Posterior cingulate gyrus (tissue), 11 donors: ENCODE measurements at regions of chr1 and their contacts with region 1.

Region 1: DNA sequence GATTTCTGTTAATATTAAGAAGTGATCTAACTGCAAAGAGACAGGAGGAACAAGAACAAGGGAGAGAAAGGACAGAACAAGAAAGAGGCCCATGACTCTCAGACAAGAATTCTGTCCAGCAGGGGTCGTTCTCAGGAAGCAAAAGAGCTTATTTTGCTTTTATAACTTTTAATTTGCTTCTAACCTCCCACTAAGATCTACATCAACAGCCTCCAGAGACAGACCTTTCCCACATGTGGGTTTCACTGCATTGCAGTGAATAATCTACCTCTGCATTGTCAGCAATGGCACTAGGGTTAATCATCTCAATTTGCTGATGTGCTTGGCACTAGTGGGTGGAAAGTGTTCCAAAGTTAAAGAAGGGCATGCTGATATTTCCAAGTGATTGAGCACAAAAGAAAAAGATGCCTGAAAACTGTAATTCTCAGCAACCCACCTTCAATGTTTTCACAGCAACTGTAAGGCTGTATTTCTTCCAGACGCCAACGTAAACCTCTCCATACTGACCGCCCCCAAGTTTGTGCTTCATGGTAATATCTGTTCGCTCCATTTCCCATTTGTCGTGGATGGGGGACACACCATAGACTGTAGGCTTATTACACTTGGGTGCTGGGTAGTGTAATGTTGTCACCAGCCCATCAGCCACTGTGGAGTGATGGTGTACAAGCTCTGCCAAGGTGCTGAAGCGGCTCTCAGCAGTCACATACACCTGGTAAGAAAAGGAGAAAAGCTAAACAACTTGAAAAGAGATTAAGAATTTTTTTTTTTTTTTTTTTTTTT is 39.5 kb downstream of the TOR3A start:
- DNase-seq: peak in 2 of 10 donors; percentile 30 to 31

Region 2: DNA sequence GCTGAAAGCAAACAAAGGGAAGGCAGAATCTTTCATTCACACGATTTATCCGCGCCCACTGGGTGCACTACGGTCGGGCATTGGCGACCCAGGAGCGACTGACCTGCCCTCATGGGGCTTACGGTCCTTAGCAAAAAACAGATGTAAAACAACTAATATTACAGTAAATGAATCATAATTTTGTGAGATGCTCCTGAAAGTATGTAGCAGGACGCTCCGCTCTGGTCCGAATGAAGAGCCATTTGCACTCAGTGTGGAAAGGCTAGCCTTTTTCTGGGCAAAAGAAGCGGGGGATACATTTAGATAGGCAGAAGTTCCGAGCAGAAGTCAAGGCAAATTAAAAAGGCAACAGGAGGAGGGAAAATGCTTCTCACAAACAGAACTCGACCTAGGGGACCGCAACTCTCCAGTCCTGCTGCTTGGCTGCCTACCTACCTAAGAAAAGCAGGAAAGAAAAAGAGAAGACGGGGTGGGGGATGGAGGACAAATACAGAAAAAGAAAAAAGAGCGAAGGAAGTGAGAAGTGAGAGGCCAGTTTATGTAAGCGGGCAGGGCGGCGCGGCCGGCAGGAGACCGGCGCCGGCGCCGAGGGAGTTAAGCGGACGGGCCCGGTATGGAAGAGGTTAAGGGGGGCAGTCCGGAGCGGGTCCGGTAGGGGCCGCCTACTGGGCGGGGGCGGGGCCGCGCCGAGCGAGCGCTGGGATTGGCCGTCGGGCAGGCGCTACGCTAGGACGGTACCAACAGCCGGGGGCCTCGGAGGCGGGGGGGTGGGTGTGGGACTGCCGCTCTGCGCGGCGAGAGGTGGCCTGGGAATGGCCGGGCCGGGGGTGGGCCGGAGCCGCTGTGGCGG is 96.0 kb before region 1 on chr1 and contains the start of gene FAM20B:
- intact Hi-C with region 1: no loop called
- DNase-seq: peak; percentile 88 to 99 (median 93)

Region 3: DNA sequence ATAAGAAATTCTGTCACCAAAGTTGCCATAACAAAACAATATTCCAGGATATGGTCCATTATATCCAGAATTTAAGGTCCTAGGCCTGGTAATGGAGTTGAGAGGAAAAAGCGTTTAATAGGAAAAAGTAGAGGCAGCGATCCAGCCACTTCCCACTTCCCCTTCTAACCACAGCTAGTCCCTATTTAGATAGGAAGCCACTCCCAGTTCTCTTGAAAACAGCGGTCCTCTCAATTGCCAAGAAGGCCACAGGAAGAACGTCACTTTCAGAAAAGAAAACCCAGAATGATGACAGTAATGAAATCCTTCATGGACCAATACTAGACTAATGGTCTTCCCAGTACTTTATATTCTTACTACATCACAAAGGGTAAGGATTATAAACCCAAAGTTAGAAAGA is 69.5 kb after region 1 on chr1:
- intact Hi-C with region 1: loop called (anchors 5 kb)
- DNase-seq: no peak

Region 4: GRCh38 chr1:179231923-179232322 is 110.6 kb after region 1 on chr1:
- intact Hi-C with region 1: no loop called
- DNase-seq: no peak

Region 5: GRCh38 chr1:179293340-179294327 is 172.3 kb after region 1 on chr1 and contains the start of gene SOAT1:
- intact Hi-C with region 1: loop called (anchors 5 kb)
- DNase-seq: peak; percentile 89 to 99 (median 95)